ENCODE measurements at regions of chr10 and their contacts with region 1.

Region 1: GRCh38 chr10:28334296-28334695 is 31.4 kb upstream of the MPP7 start:
- DNase-seq: peak; percentile 92
- H3K4me3 Mint-ChIP-seq: peak overlapping the region; percentile 91
- H3K27ac Mint-ChIP-seq: peak overlapping the region; percentile 100
- H3K4me1 Mint-ChIP-seq: peaks cover 46% of the 10 kb centered on the region
- H3K27me3 Mint-ChIP-seq: peaks cover 9% of the 10 kb centered on the region

Region 2: GRCh38 chr10:28280652-28281051 is 53.6 kb before region 1 on chr10:
- intact Hi-C with region 1: no loop called
- DNase-seq: no peak
- H3K4me3 Mint-ChIP-seq: no peak overlapping the region
- H3K27ac Mint-ChIP-seq: no peak overlapping the region
- H3K4me1 Mint-ChIP-seq: no peaks in the 10 kb centered on the region
- H3K27me3 Mint-ChIP-seq: no peaks in the 10 kb centered on the region

Region 3: DNA sequence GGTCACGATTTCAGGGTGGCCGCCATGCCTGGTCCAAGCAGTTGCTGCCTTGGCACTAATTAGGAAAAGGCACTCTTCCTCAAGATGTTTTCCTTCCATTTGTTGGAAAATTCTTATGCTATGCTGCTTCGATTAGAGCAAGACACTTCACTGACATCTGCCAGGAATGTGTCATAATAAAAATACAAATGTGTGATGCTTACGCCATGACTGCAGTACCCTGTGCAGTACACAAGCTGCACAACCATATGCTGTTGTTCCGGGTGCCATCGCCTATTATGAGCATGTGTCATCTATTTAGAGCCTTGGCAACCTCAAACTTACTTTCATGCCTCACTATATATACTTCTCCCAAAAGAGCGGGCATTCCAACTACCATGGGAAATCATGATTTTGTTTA is 16.5 kb before region 1 on chr10:
- intact Hi-C with region 1: loop called (anchors 2 kb)
- DNase-seq: no peak
- H3K4me3 Mint-ChIP-seq: no peak overlapping the region
- H3K27ac Mint-ChIP-seq: no peak overlapping the region
- H3K4me1 Mint-ChIP-seq: no peaks in the 10 kb centered on the region
- H3K27me3 Mint-ChIP-seq: peaks cover 6% of the 10 kb centered on the region

Region 4: GRCh38 chr10:28367929-28368484 is 33.7 kb after region 1 on chr10:
- intact Hi-C with region 1: loop called (anchors 1 kb)
- DNase-seq: peak; percentile 91
- H3K4me3 Mint-ChIP-seq: peak overlapping the region; percentile 59
- H3K27ac Mint-ChIP-seq: peak overlapping the region; percentile 80
- H3K4me1 Mint-ChIP-seq: peaks cover 32% of the 10 kb centered on the region
- H3K27me3 Mint-ChIP-seq: no peaks in the 10 kb centered on the region

Region 5: GRCh38 chr10:29482591-29483431 is 1148.5 kb after region 1 on chr10:
- intact Hi-C with region 1: loop called (anchors 10 kb)
- DNase-seq: peak; percentile 78
- H3K4me3 Mint-ChIP-seq: peak overlapping the region; percentile 32
- H3K27ac Mint-ChIP-seq: peak overlapping the region; percentile 66
- H3K4me1 Mint-ChIP-seq: peaks cover 39% of the 10 kb centered on the region
- H3K27me3 Mint-ChIP-seq: no peaks in the 10 kb centered on the region

Measured in activated CD4-positive, alpha-beta T cell treated with anti-CD3 and anti-CD28 coated beads, Interleukin-2, amount 10 ng/mL, durations not matched to agents 24 days and 14 days (primary cell).